Activated B cell treated with CpG ODN at 0.5 μM for 24 hours (primary cell): ENCODE measurements at regions of chr6 and their contacts with region 1.

Region 1: GRCh38 chr6:12289933-12290820 is at the start of gene EDN1:
- DNase-seq: peak; percentile 44
- ATAC-seq: peak; percentile 84
- H3K4me3 Mint-ChIP-seq: peak within 1 kb of the TSS; percentile 86
- H3K27ac Mint-ChIP-seq: no peak within 1 kb of the TSS
- H3K4me1 Mint-ChIP-seq: peaks cover 15% of the 10 kb centered on the region
- H3K27me3 Mint-ChIP-seq: peaks cover 36% of the 10 kb centered on the region
- CTCF ChIP-seq: no peak
- total RNA-seq, gene EDN1: 0.56 and 0.91 TPM in 2 replicates

Region 2: GRCh38 chr6:11700118-11700718 is 590.0 kb before region 1 on chr6:
- CTCF ChIA-PET with region 1: interaction called, 3 read pairs
- POLR2A ChIA-PET with region 1: no interaction called
- intact Hi-C with region 1: loop called (anchors 1 kb)
- DNase-seq: no peak
- ATAC-seq: no peak
- H3K4me3 Mint-ChIP-seq: no peak overlapping the region
- H3K27ac Mint-ChIP-seq: no peak overlapping the region
- H3K4me1 Mint-ChIP-seq: no peaks in the 10 kb centered on the region
- H3K27me3 Mint-ChIP-seq: no peaks in the 10 kb centered on the region
- CTCF ChIP-seq: no peak

Region 3: GRCh38 chr6:11824986-11825385 is 465.2 kb before region 1 on chr6:
- CTCF ChIA-PET with region 1: interaction called, 3 read pairs
- POLR2A ChIA-PET with region 1: no interaction called
- intact Hi-C with region 1: loop called (anchors 1 kb)
- DNase-seq: no peak
- ATAC-seq: peak; percentile 83
- H3K4me3 Mint-ChIP-seq: peak overlapping the region; percentile 36
- H3K27ac Mint-ChIP-seq: peak overlapping the region; percentile 64
- H3K4me1 Mint-ChIP-seq: peaks cover 42% of the 10 kb centered on the region
- H3K27me3 Mint-ChIP-seq: no peaks in the 10 kb centered on the region
- CTCF ChIP-seq: no peak

Region 4: GRCh38 chr6:12354499-12354898 is 64.3 kb after region 1 on chr6:
- CTCF ChIA-PET with region 1: no interaction called
- POLR2A ChIA-PET with region 1: no interaction called
- intact Hi-C with region 1: no loop called
- DNase-seq: no peak
- ATAC-seq: peak; percentile 77
- H3K4me3 Mint-ChIP-seq: no peak overlapping the region
- H3K27ac Mint-ChIP-seq: no peak overlapping the region
- H3K4me1 Mint-ChIP-seq: peaks cover 23% of the 10 kb centered on the region
- H3K27me3 Mint-ChIP-seq: no peaks in the 10 kb centered on the region
- CTCF ChIP-seq: no peak

Region 5: GRCh38 chr6:12504319-12504966 is 214.3 kb after region 1 on chr6:
- CTCF ChIA-PET with region 1: interaction called, 4 read pairs
- POLR2A ChIA-PET with region 1: no interaction called
- intact Hi-C with region 1: loop called (anchors 1 kb)
- DNase-seq: no peak
- ATAC-seq: peak; percentile 67
- H3K4me3 Mint-ChIP-seq: no peak overlapping the region
- H3K27ac Mint-ChIP-seq: no peak overlapping the region
- H3K4me1 Mint-ChIP-seq: no peaks in the 10 kb centered on the region
- H3K27me3 Mint-ChIP-seq: peaks cover 3% of the 10 kb centered on the region
- CTCF ChIP-seq: no peak

Region 6: DNA sequence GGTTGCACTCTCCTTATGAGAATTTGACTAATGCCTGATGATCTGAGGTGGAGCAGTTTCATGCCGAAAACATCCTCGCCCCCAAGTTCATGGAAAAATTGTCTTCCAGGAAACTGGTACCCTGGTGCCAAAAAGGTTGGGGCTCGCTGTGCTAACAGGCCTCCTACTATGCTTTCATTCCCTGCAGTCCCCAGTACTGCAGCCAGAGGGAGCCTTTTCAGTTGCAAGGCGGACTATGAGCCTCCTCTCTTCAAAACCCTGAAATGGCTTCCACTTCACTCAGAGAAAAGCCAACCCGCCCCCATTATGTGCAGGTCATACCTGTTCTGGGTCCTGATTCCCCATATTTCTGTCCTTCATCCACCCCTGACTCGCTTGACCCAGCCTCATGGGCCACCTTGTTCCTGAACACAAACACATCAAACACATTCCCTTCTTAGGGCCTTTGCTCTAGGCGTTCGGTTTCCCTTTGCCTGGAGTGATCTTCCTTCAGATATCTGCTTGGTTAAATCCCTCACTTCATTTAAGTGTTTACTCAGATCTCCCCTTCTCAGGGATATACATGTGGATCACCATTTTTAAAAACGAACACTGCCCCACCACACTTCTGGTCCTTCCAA is 600.1 kb after region 1 on chr6:
- CTCF ChIA-PET with region 1: no interaction called
- POLR2A ChIA-PET with region 1: no interaction called
- intact Hi-C with region 1: loop called (anchors 5 kb)
- DNase-seq: no peak
- ATAC-seq: no peak
- H3K4me3 Mint-ChIP-seq: no peak overlapping the region
- H3K27ac Mint-ChIP-seq: no peak overlapping the region
- H3K4me1 Mint-ChIP-seq: peaks cover 3% of the 10 kb centered on the region
- H3K27me3 Mint-ChIP-seq: peaks cover 5% of the 10 kb centered on the region
- CTCF ChIP-seq: no peak